ENCODE measurements at regions of chr5 and their contacts with region 1.

Region 1: DNA sequence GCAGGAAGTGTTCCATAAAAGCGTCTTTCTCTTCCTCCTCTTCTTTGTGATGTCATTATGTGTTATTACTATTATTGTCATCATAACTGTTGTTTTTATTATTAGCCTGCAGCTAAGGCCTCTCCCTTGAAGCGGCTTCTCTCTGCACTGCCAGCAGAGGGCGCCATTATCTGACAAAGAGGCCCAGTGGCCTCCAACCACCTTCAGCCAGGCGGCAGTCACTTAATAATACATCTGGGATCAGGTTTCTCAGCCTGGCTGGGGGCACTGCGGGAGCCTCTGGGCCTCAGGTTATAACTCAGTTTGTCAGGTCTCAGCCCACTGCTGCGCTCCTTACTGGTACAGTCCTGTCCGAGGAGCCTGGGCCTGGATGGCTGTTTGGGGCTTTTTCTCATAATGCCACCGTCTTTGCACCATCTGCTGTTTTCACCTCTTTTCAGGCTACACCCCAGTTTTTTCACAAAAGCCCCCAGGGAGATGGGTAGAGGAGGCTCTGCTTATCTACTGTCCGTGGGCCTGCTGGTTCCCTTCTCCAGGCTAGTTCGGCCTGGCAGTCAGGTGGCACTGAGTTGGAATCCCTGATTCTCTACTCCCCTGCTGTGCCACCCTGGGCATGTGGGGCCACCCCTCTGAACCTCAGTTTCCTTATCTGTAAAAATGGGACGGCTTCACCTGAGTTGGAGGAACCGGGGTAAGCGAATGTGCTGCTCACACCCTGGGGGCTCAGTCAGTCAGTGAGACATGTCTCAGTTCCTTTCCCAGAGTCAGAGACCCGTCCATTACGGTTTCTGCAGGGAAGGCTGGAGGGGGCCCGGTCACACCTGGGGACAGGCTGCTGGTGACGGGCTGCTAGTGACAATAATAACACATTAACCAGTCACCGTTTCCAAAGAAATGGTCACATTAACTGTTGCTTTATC is 282.1 kb downstream of the NSG2 start:
- DNase-seq: peak; percentile 82 to 83 (median 82)
- ATAC-seq: peak; percentile 98
- H3K4me3 ChIP-seq: no peak overlapping the region
- H3K27ac ChIP-seq: no peak overlapping the region
- H3K4me1 ChIP-seq: no peaks in the 10 kb centered on the region
- H3K27me3 ChIP-seq: peaks cover 11 to 50% of the 10 kb centered on the region in 2 experiments; a peak in 3 of 5 replicates
- CTCF ChIP-seq: peak; percentile 89 to 97 (median 96)
- EP300 ChIP-seq: no peak
- POLR2A ChIP-seq: no peak
- RAD21 ChIP-seq: peak; percentile 68 to 81

Region 2: GRCh38 chr5:174402221-174402815 is 74.7 kb after region 1 on chr5:
- CTCF ChIA-PET with region 1: no interaction called
- POLR2A ChIA-PET with region 1: no interaction called
- in situ Hi-C with region 1: no loop called
- intact Hi-C with region 1: no loop called
- DNase-seq: no peak
- ATAC-seq: no peak
- H3K4me3 ChIP-seq: no peak overlapping the region
- H3K27ac ChIP-seq: no peak overlapping the region
- H3K4me1 ChIP-seq: no peaks in the 10 kb centered on the region
- H3K27me3 ChIP-seq: peaks cover 3 to 9% of the 10 kb centered on the region in 2 experiments; a peak in 3 of 5 replicates
- CTCF ChIP-seq: peak in 1 of 3 experiments; percentile 14; a peak in 1 of 6 replicates
- EP300 ChIP-seq: no peak
- POLR2A ChIP-seq: no peak
- RAD21 ChIP-seq: no peak

Region 3: GRCh38 chr5:174667521-174667920 is 339.9 kb after region 1 on chr5:
- CTCF ChIA-PET with region 1: no interaction called
- POLR2A ChIA-PET with region 1: no interaction called
- in situ Hi-C with region 1: no loop called
- intact Hi-C with region 1: no loop called
- DNase-seq: no peak
- ATAC-seq: no peak
- H3K4me3 ChIP-seq: no peak overlapping the region
- H3K27ac ChIP-seq: no peak overlapping the region
- H3K4me1 ChIP-seq: no peaks in the 10 kb centered on the region
- H3K27me3 ChIP-seq: peaks cover 5 to 6% of the 10 kb centered on the region in 2 experiments; a peak in 4 of 5 replicates
- CTCF ChIP-seq: no peak
- EP300 ChIP-seq: no peak
- POLR2A ChIP-seq: no peak
- RAD21 ChIP-seq: no peak

Region 4: GRCh38 chr5:174793684-174794328 is 466.2 kb after region 1 on chr5:
- CTCF ChIA-PET with region 1: interaction called, 4 read pairs
- POLR2A ChIA-PET with region 1: no interaction called
- in situ Hi-C with region 1: no loop called
- intact Hi-C with region 1: loop called (anchors 5 kb)
- DNase-seq: peak; percentile 57 to 65 (median 61)
- ATAC-seq: peak; percentile 96
- H3K4me3 ChIP-seq: no peak overlapping the region
- H3K27ac ChIP-seq: no peak overlapping the region
- H3K4me1 ChIP-seq: peaks cover 0 to 4% of the 10 kb centered on the region in 2 experiments; a peak in 1 of 5 replicates
- H3K27me3 ChIP-seq: peaks cover 0 to 4% of the 10 kb centered on the region in 2 experiments; a peak in 2 of 5 replicates
- CTCF ChIP-seq: peak; percentile 85 to 90 (median 86)
- EP300 ChIP-seq: no peak
- POLR2A ChIP-seq: no peak
- RAD21 ChIP-seq: peak; percentile 82 to 83